A673 (cell line): ENCODE measurements at regions of chr10 and their contacts with region 1.

Region 1: DNA sequence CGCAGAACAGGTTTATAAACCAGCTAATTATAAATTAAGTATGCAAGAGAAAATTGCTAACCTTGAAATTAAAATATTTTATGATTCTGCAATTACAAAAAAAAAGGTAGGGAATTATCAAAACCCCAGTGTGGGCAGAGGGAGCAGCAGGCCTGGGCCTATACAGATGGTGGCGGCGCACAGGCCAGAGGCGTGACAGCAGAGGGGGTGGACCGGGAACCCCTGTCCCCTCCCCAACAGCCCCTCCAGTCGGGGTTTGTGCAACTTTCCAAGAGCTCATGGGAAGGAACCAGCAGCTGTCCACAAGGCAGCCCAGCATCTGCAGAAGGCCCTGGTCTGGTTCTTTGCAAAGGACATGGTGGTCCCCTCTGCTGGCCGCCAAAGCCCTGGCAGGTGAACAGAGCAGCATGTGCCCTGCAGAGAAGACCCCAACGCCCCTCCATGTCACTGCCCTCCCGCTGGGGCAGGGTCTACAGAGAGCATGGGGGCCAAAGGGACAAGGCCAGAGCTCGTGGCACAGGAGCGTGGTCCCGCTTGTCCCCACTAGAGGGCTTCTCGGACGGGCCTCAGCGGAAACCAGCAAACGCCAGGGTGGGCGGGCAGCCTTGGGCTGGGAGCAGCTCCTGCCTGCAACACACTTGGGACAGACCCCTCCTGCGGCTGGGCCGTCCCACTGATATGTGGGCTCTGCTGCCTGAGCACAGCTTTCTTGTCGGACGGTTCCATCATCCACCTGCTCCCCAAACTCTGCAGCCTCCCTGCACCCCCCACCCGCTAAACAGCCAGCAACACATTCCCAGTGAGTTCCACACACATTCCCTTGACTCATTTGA is 75.1 kb downstream of the EBF3 start:
- DNase-seq: peak; percentile 70
- H3K4me3 ChIP-seq: no peak overlapping the region
- H3K27ac ChIP-seq: no peak overlapping the region
- H3K4me1 ChIP-seq: peaks cover 50% of the 10 kb centered on the region
- H3K27me3 ChIP-seq: no peaks in the 10 kb centered on the region
- CTCF ChIP-seq: peak; percentile 80

Region 2: DNA sequence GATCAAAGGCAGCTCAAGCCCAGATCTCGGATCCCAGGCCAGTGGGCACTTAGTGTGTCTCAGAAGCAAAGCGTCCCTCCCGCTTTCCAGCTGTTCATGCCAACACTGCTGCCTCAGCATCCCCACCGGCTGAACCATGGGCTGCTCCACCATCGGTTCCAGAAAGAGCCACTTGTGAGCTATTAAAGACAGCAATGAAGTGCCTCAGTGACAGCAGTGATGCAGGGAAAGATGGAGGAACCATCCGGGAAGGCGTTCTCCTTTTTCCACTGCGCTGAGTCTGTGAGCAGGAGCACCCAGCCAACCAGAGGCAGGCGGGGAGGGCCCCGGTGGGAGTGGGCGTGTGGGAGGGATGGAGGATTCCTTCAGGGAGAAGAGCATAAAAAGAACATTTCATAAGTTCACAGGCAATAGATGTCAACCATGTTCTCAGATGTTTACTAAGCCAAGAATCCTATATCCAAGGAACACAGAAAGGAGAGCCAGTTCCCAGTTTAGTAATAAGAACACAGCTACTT is 1666.6 kb before region 1 on chr10:
- CTCF ChIA-PET with region 1: interaction called, 11 read pairs
- POLR2A ChIA-PET with region 1: no interaction called
- intact Hi-C with region 1: no loop called
- DNase-seq: no peak
- H3K4me3 ChIP-seq: no peak overlapping the region
- H3K27ac ChIP-seq: no peak overlapping the region
- H3K4me1 ChIP-seq: no peaks in the 10 kb centered on the region
- H3K27me3 ChIP-seq: peaks cover 24% of the 10 kb centered on the region
- CTCF ChIP-seq: no peak

Region 3: GRCh38 chr10:129868449-129869035 is 20.5 kb before region 1 on chr10:
- CTCF ChIA-PET with region 1: interaction called, 16 read pairs
- POLR2A ChIA-PET with region 1: no interaction called
- intact Hi-C with region 1: no loop called
- DNase-seq: no peak
- H3K4me3 ChIP-seq: no peak overlapping the region
- H3K27ac ChIP-seq: no peak overlapping the region
- H3K4me1 ChIP-seq: peaks cover 7% of the 10 kb centered on the region
- H3K27me3 ChIP-seq: no peaks in the 10 kb centered on the region
- CTCF ChIP-seq: no peak